ENCODE measurements at regions of chr10 and their contacts with region 1.

Region 1: GRCh38 chr10:14837757-14838581 is at the starts of genes CDNF, HSPA14 and MSANTD7:
- DNase-seq: peak; percentile 100
- ATAC-seq: peak; percentile 95
- H3K4me3 ChIP-seq: peak within 1 kb of the TSS; percentile 63 to 99 (median 98)
- H3K4me3 Mint-ChIP-seq: peak within 1 kb of the TSS; percentile 98
- H3K27ac ChIP-seq: peak within 1 kb of the TSS; percentile 83 to 85
- H3K27ac Mint-ChIP-seq: peak within 1 kb of the TSS; percentile 98
- H3K4me1 ChIP-seq: peaks cover 16 to 17% of the 10 kb centered on the region in 2 donors
- H3K4me1 Mint-ChIP-seq: peaks cover 20% of the 10 kb centered on the region
- H3K27me3 ChIP-seq: no peaks in the 10 kb centered on the region
- H3K27me3 Mint-ChIP-seq: no peaks in the 10 kb centered on the region
- CTCF ChIP-seq: no peak
- total RNA-seq, gene CDNF: 1.4 and 1.6 TPM in 2 replicates
- total RNA-seq, gene HSPA14: 12.5 and 12.8 TPM in 2 replicates
- total RNA-seq, gene MSANTD7: 12.9 and 15.2 TPM in 2 replicates

Region 2: DNA sequence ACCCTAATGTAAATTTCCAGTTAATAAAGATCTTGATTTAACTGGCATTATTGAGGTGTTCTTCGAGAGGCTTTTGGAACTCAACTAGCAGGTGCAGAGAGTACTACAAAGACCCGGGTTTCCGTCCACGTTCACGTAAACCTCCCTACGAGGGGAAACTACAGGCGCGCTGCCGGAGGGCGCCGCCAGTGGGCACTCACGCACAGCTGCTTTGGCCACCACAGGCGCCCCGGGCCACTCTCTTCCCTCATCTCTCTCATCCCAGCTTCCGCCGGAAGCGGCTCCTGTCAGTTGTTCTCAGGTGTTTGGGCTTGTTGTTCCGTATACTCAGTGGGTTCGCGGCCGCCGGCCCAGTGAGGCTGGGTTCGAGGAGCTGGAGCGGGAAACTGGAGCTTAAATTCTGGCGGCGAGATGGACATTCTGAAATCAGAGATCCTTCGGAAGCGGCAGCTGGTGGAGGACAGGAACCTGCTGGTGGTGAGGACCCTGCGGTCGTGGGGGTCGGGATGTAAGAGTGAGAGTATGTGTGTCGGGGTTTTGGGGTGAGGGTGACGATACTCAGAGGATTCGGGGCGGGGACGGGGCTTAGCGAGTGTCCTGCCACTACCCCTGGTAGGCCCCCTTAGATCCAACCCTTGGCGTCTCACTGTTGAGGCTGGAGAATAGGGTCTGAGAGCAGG is 1251.2 kb before region 1 on chr10 and contains the start of gene PRPF18:
- CTCF ChIA-PET with region 1: no interaction called
- POLR2A ChIA-PET with region 1: no interaction called
- intact Hi-C with region 1: loop called (anchors 2 kb)
- DNase-seq: peak; percentile 95
- ATAC-seq: peak; percentile 100
- H3K4me3 ChIP-seq: peak within 1 kb of the TSS; percentile 53 to 99 (median 84)
- H3K4me3 Mint-ChIP-seq: peak within 1 kb of the TSS; percentile 95
- H3K27ac ChIP-seq: peak within 1 kb of the TSS; percentile 0 to 85
- H3K27ac Mint-ChIP-seq: peak within 1 kb of the TSS; percentile 90
- H3K4me1 ChIP-seq: peaks cover 10 to 13% of the 10 kb centered on the region in 2 donors
- H3K4me1 Mint-ChIP-seq: peaks cover 31% of the 10 kb centered on the region
- H3K27me3 ChIP-seq: peaks cover 0 to 16% (median 2%) of the 10 kb centered on the region in 4 experiments
- H3K27me3 Mint-ChIP-seq: peaks cover 25% of the 10 kb centered on the region
- CTCF ChIP-seq: peak; percentile 99
- total RNA-seq, gene PRPF18: 28.9 and 31.8 TPM in 2 replicates

Region 3: DNA sequence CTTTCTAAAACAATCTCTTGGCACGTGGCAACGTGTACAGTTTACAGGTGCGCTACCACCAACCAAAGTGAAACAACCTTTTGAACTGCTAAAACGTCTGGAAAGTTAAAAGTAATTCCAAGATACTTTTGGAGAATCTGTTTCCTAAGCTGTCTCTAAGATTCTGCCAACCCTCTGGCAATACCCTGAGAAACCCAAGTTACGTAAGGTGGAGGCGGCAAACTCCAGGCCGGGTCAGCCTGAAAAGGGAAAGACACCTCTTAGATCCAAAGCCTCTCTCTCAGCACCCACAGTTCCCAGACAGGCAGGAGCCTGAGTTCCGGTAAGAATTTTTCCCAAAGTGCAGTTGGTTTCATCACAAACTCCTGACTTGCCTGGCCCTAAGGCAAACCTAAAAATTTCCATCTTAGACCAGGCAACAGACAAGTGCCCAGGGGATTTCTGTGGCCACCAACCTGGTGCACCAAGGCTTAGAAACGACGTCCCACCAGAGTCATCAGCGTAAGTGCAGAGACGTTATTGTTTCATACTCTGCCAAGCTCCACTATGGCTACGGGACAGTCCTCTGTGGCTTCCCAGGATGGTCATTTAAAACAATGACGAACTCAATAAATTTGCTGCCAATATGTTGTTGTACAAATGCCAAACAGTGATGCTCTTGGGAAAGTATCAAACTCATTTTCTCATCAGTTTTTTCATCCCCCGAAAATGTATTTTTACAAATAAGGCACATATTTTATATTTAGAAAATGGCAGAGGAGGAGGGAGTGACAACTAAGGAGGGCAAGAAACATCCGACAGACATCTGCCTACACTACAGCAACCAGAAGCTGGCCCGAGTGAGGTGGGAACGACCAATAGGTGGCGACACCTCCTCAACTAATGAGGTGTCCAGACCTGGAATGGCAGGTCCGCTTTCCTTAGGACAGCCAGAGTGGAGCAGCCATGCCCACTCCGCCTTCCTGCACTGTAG is 301.4 kb before region 1 on chr10:
- CTCF ChIA-PET with region 1: interaction called, 13 read pairs
- POLR2A ChIA-PET with region 1: interaction called, 4 read pairs
- intact Hi-C with region 1: loop called (anchors 5 kb)
- DNase-seq: peak; percentile 62
- ATAC-seq: no peak
- H3K4me3 ChIP-seq: no peak overlapping the region
- H3K4me3 Mint-ChIP-seq: no peak overlapping the region
- H3K27ac ChIP-seq: peak overlapping the region in 1 of 2 donors; percentile 48
- H3K27ac Mint-ChIP-seq: no peak overlapping the region
- H3K4me1 ChIP-seq: peaks cover 0 to 10% of the 10 kb centered on the region in 2 donors
- H3K4me1 Mint-ChIP-seq: peaks cover 59% of the 10 kb centered on the region
- H3K27me3 ChIP-seq: no peaks in the 10 kb centered on the region
- H3K27me3 Mint-ChIP-seq: no peaks in the 10 kb centered on the region
- CTCF ChIP-seq: peak; percentile 76

Region 4: GRCh38 chr10:14751014-14751896 is 86.7 kb before region 1 on chr10:
- CTCF ChIA-PET with region 1: no interaction called
- POLR2A ChIA-PET with region 1: interaction called, 7 read pairs
- intact Hi-C with region 1: loop called (anchors 5 kb)
- DNase-seq: peak; percentile 85
- ATAC-seq: peak; percentile 80
- H3K4me3 ChIP-seq: peak overlapping the region in 3 of 5 experiments; percentile 6 to 30 (median 13)
- H3K4me3 Mint-ChIP-seq: peak overlapping the region; percentile 81
- H3K27ac ChIP-seq: peak overlapping the region; percentile 84 to 96
- H3K27ac Mint-ChIP-seq: peak overlapping the region; percentile 98
- H3K4me1 ChIP-seq: peaks cover 48 to 58% of the 10 kb centered on the region in 2 donors
- H3K4me1 Mint-ChIP-seq: peaks cover 62% of the 10 kb centered on the region
- H3K27me3 ChIP-seq: no peaks in the 10 kb centered on the region
- H3K27me3 Mint-ChIP-seq: no peaks in the 10 kb centered on the region
- CTCF ChIP-seq: no peak

Region 5: DNA sequence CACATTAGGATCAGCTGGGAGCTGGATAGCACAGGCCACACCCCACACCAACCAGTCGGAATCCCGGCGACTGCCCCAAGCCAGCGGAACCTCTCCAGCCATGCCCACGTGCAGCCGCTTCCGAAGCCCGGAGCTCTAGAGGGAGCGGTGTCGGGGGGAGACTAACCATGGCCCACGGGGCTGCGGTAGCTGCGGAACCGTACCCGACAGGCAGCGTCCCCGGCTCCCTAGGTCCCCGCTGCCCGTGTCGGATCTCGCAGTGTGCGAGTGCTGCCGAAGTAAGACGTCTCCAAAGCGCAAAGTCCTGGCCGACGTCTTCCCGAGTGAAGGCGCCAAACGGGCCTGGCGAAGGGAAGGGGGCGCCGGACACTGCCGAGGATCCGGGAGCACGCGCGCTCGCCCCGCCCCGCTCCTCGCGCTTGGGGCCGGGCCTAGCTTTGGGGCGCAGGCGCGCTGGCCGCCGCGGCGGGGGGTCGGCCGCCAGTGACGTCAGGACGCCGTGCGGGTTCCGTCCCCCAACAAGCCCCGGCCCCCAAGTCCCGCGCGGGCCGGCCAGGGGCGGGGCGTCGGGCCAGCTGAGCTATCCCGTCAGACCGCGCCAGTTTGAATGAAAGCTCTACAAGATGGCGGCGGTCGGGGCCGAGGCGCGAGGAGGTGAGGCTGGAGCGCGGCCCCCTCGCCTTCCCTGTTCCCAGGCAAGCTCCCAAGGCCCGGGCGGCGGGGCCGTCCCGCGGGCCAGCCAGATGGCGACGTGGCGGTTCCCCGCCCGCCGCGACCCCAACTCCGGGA is 40.5 kb after region 1 on chr10 and contains the start of gene SUV39H2:
- CTCF ChIA-PET with region 1: interaction called, 7 read pairs
- POLR2A ChIA-PET with region 1: interaction called, 10 read pairs
- intact Hi-C with region 1: loop called (anchors 1 kb)
- DNase-seq: peak; percentile 96
- ATAC-seq: peak; percentile 92
- H3K4me3 ChIP-seq: peak within 1 kb of the TSS; percentile 53 to 98 (median 94)
- H3K4me3 Mint-ChIP-seq: peak within 1 kb of the TSS; percentile 96
- H3K27ac ChIP-seq: peak within 1 kb of the TSS; percentile 64 to 80
- H3K27ac Mint-ChIP-seq: peak within 1 kb of the TSS; percentile 87
- H3K4me1 ChIP-seq: peaks cover 17 to 23% of the 10 kb centered on the region in 2 donors
- H3K4me1 Mint-ChIP-seq: peaks cover 28% of the 10 kb centered on the region
- H3K27me3 ChIP-seq: peaks cover 0 to 6% (median 0%) of the 10 kb centered on the region in 4 experiments
- H3K27me3 Mint-ChIP-seq: no peaks in the 10 kb centered on the region
- CTCF ChIP-seq: no peak
- total RNA-seq, gene SUV39H2: 3.2 and 3.5 TPM in 2 replicates

Region 6: GRCh38 chr10:14971867-14972448 is 134.0 kb after region 1 on chr10:
- CTCF ChIA-PET with region 1: interaction called, 23 read pairs
- POLR2A ChIA-PET with region 1: no interaction called
- intact Hi-C with region 1: no loop called
- DNase-seq: peak; percentile 68
- ATAC-seq: peak; percentile 58
- H3K4me3 ChIP-seq: no peak overlapping the region
- H3K4me3 Mint-ChIP-seq: no peak overlapping the region
- H3K27ac ChIP-seq: no peak overlapping the region
- H3K27ac Mint-ChIP-seq: no peak overlapping the region
- H3K4me1 ChIP-seq: no peaks in the 10 kb centered on the region
- H3K4me1 Mint-ChIP-seq: peaks cover 2% of the 10 kb centered on the region
- H3K27me3 ChIP-seq: peaks cover 0 to 14% (median 0%) of the 10 kb centered on the region in 4 experiments
- H3K27me3 Mint-ChIP-seq: peaks cover 14% of the 10 kb centered on the region
- CTCF ChIP-seq: peak; percentile 85